OCI-LY7 (cell line): ENCODE measurements at regions of chr1 and their contacts with region 1.

Region 1: GRCh38 chr1:86380257-86380861 is 15.8 kb downstream of the ODF2L start:
- DNase-seq: peak; percentile 69
- H3K4me3 ChIP-seq: no peak overlapping the region
- H3K27ac ChIP-seq: no peak overlapping the region
- H3K4me1 ChIP-seq: no peaks in the 10 kb centered on the region
- CTCF ChIP-seq: peak; percentile 95

Region 2: GRCh38 chr1:86362807-86363206 is 17.6 kb before region 1 on chr1:
- CTCF ChIA-PET with region 1: no interaction called
- POLR2A ChIA-PET with region 1: interaction called, 10 read pairs
- intact Hi-C with region 1: no loop called
- DNase-seq: no peak
- H3K4me3 ChIP-seq: no peak overlapping the region
- H3K27ac ChIP-seq: no peak overlapping the region
- H3K4me1 ChIP-seq: no peaks in the 10 kb centered on the region
- CTCF ChIP-seq: no peak

Region 3: GRCh38 chr1:86395771-86396497 is 15.6 kb after region 1 on chr1 and contains the start of gene ODF2L:
- CTCF ChIA-PET with region 1: no interaction called
- POLR2A ChIA-PET with region 1: interaction called, 27 read pairs
- intact Hi-C with region 1: no loop called
- DNase-seq: peak; percentile 88
- H3K4me3 ChIP-seq: peak within 1 kb of the TSS; percentile 83
- H3K27ac ChIP-seq: peak within 1 kb of the TSS; percentile 74
- H3K4me1 ChIP-seq: peaks cover 28% of the 10 kb centered on the region
- CTCF ChIP-seq: no peak
- total RNA-seq, gene ODF2L: 24.7 and 26.2 TPM in 2 replicates

Region 4: DNA sequence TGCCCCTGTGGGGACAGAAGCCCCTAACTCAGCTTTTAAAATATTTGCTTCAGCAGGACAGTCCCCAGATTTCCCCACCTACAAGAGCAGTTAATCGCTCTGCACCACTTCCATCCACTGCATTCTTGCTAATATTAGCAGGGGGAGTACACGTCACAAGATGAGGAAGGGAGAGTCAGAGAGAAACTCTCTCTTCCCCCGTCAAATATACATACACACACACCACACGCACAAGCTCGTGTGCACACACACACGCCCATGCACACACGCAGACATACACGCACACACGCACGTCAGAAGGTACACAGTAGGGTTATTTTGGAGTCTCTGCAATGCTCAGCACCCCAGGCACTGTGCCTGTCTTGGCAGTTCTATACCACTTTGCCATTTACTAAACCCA is 90.5 kb after region 1 on chr1:
- CTCF ChIA-PET with region 1: no interaction called
- POLR2A ChIA-PET with region 1: no interaction called
- intact Hi-C with region 1: loop called (anchors 5 kb)
- DNase-seq: no peak
- H3K4me3 ChIP-seq: no peak overlapping the region
- H3K27ac ChIP-seq: no peak overlapping the region
- H3K4me1 ChIP-seq: no peaks in the 10 kb centered on the region
- CTCF ChIP-seq: no peak

Region 5: GRCh38 chr1:86499987-86500593 is 119.7 kb after region 1 on chr1:
- CTCF ChIA-PET with region 1: no interaction called
- POLR2A ChIA-PET with region 1: no interaction called
- intact Hi-C with region 1: loop called (anchors 1 kb)
- DNase-seq: peak; percentile 91
- H3K4me3 ChIP-seq: no peak overlapping the region
- H3K27ac ChIP-seq: no peak overlapping the region
- H3K4me1 ChIP-seq: no peaks in the 10 kb centered on the region
- CTCF ChIP-seq: peak; percentile 100

Region 6: GRCh38 chr1:86546787-86547221 is 166.4 kb after region 1 on chr1 and contains the start of gene CLCA4:
- CTCF ChIA-PET with region 1: no interaction called
- POLR2A ChIA-PET with region 1: no interaction called
- intact Hi-C with region 1: no loop called
- DNase-seq: no peak
- H3K4me3 ChIP-seq: no peak within 1 kb of the TSS
- H3K27ac ChIP-seq: no peak within 1 kb of the TSS
- H3K4me1 ChIP-seq: no peaks in the 10 kb centered on the region
- CTCF ChIP-seq: no peak
- total RNA-seq, gene CLCA4: not detected in 2 replicates

Region 7: GRCh38 chr1:86714159-86714558 is 333.8 kb after region 1 on chr1:
- CTCF ChIA-PET with region 1: no interaction called
- POLR2A ChIA-PET with region 1: no interaction called
- intact Hi-C with region 1: no loop called
- DNase-seq: no peak
- H3K4me3 ChIP-seq: no peak overlapping the region
- H3K27ac ChIP-seq: no peak overlapping the region
- H3K4me1 ChIP-seq: no peaks in the 10 kb centered on the region
- CTCF ChIP-seq: no peak

Region 8: DNA sequence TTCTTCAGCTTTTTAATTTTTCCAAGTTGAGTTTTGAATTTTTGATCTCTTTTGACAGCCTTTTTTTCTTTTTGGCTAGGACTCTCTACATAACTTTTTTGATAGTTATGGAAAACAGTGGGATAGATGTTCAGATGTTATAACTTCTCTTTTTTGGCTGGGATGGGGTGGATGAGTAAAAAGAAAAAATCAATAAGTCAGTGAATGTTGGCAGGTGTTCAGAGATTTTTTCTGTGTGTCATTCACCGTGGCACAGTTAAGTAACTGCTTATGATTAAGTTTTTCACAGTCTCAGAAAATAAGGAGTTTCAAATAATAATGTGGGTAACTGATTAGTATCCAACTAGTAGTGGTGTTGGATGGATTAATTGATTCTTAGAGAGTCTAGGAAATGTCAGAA is 558.1 kb after region 1 on chr1:
- CTCF ChIA-PET with region 1: no interaction called
- POLR2A ChIA-PET with region 1: no interaction called
- intact Hi-C with region 1: no loop called
- DNase-seq: no peak
- H3K4me3 ChIP-seq: no peak overlapping the region
- H3K27ac ChIP-seq: no peak overlapping the region
- H3K4me1 ChIP-seq: peaks cover 24% of the 10 kb centered on the region
- CTCF ChIP-seq: no peak

Region 9: GRCh38 chr1:87017998-87018672 is 637.8 kb after region 1 on chr1:
- CTCF ChIA-PET with region 1: no interaction called
- POLR2A ChIA-PET with region 1: no interaction called
- intact Hi-C with region 1: no loop called
- DNase-seq: no peak
- H3K4me3 ChIP-seq: no peak overlapping the region
- H3K27ac ChIP-seq: no peak overlapping the region
- H3K4me1 ChIP-seq: peaks cover 10% of the 10 kb centered on the region
- CTCF ChIP-seq: no peak